Natural killer cell (primary cell): ENCODE measurements at regions of chr4 and their contacts with region 1.

Region 1: GRCh38 chr4:36322921-36323354 is 41.5 kb downstream of the DTHD1 start:
- DNase-seq: peak in 1 of 2 donors; percentile 88
- ATAC-seq: peak; percentile 77 to 86 (median 83)
- H3K4me3 ChIP-seq: no peak overlapping the region
- H3K4me3 Mint-ChIP-seq: peak overlapping the region; percentile 67
- H3K27ac ChIP-seq: peak overlapping the region; percentile 58
- H3K27ac Mint-ChIP-seq: peak overlapping the region; percentile 17 to 39
- H3K4me1 ChIP-seq: peaks cover 22% of the 10 kb centered on the region
- H3K4me1 Mint-ChIP-seq: peaks cover 68 to 71% of the 10 kb centered on the region in 2 donors
- H3K27me3 ChIP-seq: no peaks in the 10 kb centered on the region
- H3K27me3 Mint-ChIP-seq: no peaks in the 10 kb centered on the region
- CTCF ChIP-seq: no peak

Region 2: GRCh38 chr4:36385951-36386571 is 63.1 kb after region 1 on chr4:
- intact Hi-C with region 1: loop called (anchors 2 kb)
- DNase-seq: peak; percentile 43 to 85
- ATAC-seq: peak; percentile 88 to 96 (median 91)
- H3K4me3 ChIP-seq: no peak overlapping the region
- H3K4me3 Mint-ChIP-seq: peak overlapping the region; percentile 38
- H3K27ac ChIP-seq: peak overlapping the region; percentile 24
- H3K27ac Mint-ChIP-seq: peak overlapping the region; percentile 47 to 73
- H3K4me1 ChIP-seq: peaks cover 10% of the 10 kb centered on the region
- H3K4me1 Mint-ChIP-seq: peaks cover 18 to 19% of the 10 kb centered on the region in 2 donors
- H3K27me3 ChIP-seq: peaks cover 33% of the 10 kb centered on the region
- H3K27me3 Mint-ChIP-seq: peaks cover 42 to 58% of the 10 kb centered on the region in 2 donors
- CTCF ChIP-seq: no peak